Prostate gland (tissue), 2 donors: ENCODE measurements at regions of chr14 and their contacts with region 1.

Region 1: DNA sequence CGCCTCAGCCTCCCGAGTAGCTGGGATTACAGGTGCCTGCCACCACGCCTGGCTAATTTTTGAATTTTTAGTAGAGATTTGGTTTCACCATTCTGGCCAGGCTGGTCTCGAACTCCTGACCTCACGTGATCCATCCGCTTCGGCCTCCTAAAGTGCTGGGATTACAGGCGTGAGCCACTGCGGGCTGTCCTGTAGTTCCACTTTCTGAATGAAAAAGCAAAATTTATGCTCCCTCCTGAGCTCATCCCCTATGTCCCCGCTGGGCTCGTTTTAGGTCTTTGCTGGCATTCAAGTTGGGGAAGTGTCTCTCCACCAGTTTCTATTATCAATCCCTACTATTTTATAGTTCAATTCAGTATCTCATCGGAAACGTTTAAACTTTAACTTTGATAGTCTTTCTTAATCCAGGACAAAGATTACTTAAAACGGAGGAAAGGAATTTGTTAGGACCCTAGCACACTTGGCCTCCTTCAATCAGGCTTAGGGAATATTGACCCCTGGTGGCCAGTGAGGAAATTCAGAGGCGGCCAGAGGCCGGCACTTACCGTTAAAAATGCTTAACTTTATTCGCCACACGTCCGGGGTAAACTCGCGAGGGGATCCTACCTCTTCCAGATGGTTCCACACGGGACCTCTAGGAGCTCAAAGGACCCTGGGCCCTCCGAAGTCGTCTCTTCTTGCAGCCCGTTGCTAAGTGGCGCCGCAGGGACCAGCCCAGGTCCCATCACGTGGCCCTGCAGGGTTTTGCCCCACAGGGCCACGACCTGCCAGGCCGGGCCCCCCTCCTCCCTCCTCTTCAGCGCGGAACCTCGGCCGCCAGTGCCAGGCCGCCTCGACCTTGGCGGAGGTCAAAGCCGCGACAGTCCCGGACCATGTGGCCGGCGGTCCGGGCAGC is 11.4 kb upstream of the DNAL1 start:
- DNase-seq: peak; percentile 54
- H3K4me3 ChIP-seq: peak overlapping the region; percentile 36 to 41
- H3K27ac ChIP-seq: peak overlapping the region; percentile 22 to 40
- H3K4me1 ChIP-seq: no peaks in the 10 kb centered on the region
- H3K27me3 ChIP-seq: no peaks in the 10 kb centered on the region
- CTCF ChIP-seq: peak; percentile 68 to 87 (median 85)
- POLR2A ChIP-seq: no peak

Region 2: DNA sequence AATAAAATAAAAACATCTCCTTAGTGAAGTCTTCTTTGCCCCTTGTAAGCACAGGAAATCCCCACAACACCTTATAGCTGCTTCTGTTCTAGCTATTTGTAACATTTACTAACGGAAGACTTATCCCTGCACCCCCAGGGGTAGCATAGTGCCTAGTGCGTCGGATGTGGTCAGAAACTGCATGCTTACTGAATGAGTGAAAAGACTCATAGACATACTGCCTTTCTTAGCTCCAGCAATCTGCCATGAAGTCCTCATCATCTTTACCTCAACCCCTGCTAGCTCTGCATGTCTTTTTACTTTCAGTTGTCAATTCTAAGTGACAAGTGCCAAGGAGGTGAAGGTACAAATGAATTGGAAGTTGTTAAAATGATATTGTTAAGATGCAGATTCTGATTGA is 129.7 kb before region 1 on chr14:
- intact Hi-C with region 1: loop called (anchors 2 kb)
- DNase-seq: no peak
- H3K4me3 ChIP-seq: no peak overlapping the region
- H3K27ac ChIP-seq: no peak overlapping the region
- H3K4me1 ChIP-seq: no peaks in the 10 kb centered on the region
- H3K27me3 ChIP-seq: no peaks in the 10 kb centered on the region
- CTCF ChIP-seq: no peak
- POLR2A ChIP-seq: no peak

Region 3: GRCh38 chr14:73713803-73714655 is 80.7 kb after region 1 on chr14 and contains the start of gene PNMA1:
- intact Hi-C with region 1: loop called (anchors 5 kb)
- DNase-seq: peak; percentile 84
- H3K4me3 ChIP-seq: peak within 1 kb of the TSS; percentile 77
- H3K27ac ChIP-seq: peak within 1 kb of the TSS; percentile 87 to 91
- H3K4me1 ChIP-seq: peaks cover 11% of the 10 kb centered on the region
- H3K27me3 ChIP-seq: no peaks in the 10 kb centered on the region
- CTCF ChIP-seq: no peak
- POLR2A ChIP-seq: peak; percentile 82
- total RNA-seq, gene PNMA1: 18.6 to 62.7 TPM